ENCODE measurements at regions of chr4 and their contacts with region 1.

Region 1: GRCh38 chr4:172232966-172233365 is 419.8 kb downstream of the GALNTL6 start:
- DNase-seq: peak; percentile 29
- ATAC-seq: peak; percentile 85
- H3K4me3 ChIP-seq: no peak overlapping the region
- H3K27ac ChIP-seq: no peak overlapping the region
- H3K4me1 ChIP-seq: no peaks in the 10 kb centered on the region
- H3K27me3 ChIP-seq: no peaks in the 10 kb centered on the region
- CTCF ChIP-seq: peak; percentile 23 to 49 (median 46); a peak in 5 of 6 replicates
- POLR2A ChIP-seq: no peak
- RAD21 ChIP-seq: peak; percentile 53

Region 2: DNA sequence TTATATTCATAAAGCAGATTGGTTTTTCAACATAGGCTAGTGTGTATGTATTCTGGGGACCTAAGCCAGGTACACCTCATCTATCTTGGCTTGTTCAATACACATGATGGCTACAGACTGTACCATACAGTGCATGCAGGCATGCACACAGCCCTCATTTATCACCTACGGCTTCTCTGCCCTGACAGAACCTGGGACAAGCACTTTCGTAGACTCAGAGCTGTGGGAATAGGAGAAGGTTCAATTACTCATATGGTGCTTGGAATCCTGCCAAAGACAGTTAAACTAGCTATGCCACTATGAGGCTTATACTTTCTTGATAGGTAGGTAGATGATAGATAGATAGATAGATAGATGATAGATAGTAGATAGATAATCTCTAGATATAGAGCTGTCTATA is 37.4 kb after region 1 on chr4:
- CTCF ChIA-PET with region 1: no interaction called
- POLR2A ChIA-PET with region 1: no interaction called
- RAD21 ChIA-PET with region 1: no interaction called
- intact Hi-C with region 1: no loop called
- DNase-seq: no peak
- ATAC-seq: no peak
- H3K4me3 ChIP-seq: no peak overlapping the region
- H3K27ac ChIP-seq: no peak overlapping the region
- H3K4me1 ChIP-seq: no peaks in the 10 kb centered on the region
- H3K27me3 ChIP-seq: no peaks in the 10 kb centered on the region
- CTCF ChIP-seq: no peak
- POLR2A ChIP-seq: no peak
- RAD21 ChIP-seq: no peak

Region 3: GRCh38 chr4:172830295-172830764 is 597.4 kb after region 1 on chr4:
- CTCF ChIA-PET with region 1: interaction called, 3 read pairs
- POLR2A ChIA-PET with region 1: no interaction called
- RAD21 ChIA-PET with region 1: no interaction called
- intact Hi-C with region 1: loop called (anchors 1 kb)
- DNase-seq: peak; percentile 13
- ATAC-seq: no peak
- H3K4me3 ChIP-seq: no peak overlapping the region
- H3K27ac ChIP-seq: no peak overlapping the region
- H3K4me1 ChIP-seq: peaks cover 0 to 12% of the 10 kb centered on the region in 2 experiments; a peak in 2 of 4 replicates
- H3K27me3 ChIP-seq: no peaks in the 10 kb centered on the region
- CTCF ChIP-seq: peak; percentile 20 to 67 (median 53); a peak in 4 of 6 replicates
- POLR2A ChIP-seq: no peak
- RAD21 ChIP-seq: peak; percentile 69

Measured in HCT116 (cell line).